ENCODE measurements at regions of chr3 and their contacts with region 1.

Region 1: DNA sequence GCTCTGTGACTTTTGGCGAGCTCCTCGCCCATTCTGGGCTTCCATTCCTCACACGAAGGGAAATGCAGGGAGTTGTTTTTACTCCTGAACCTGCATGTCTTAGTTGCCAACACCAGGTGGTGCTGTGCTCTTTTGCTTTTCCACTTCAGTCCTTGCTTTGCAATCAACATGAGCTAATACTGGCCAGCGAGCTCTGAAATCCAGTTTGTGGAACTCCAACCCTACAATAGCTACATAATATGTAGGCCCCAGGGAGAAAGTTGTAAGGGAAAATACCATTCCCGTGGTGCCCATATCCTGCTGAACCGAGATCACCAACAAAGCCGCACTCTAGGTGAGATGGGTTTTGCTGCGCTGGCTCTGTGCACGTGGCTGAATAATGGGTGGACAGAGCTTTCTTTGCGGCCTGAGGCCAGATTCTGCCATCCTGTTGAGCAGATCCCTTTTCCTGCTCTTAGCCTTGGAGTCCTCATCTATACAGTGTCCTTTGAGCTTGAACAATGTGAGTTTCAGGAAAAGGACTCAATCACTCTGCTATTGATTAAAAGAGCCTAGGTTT is 25.0 kb downstream of the LSM3 start:
- ATAC-seq: peak; percentile 74 to 83 (median 79)
- H3K4me3 ChIP-seq: no peak overlapping the region
- H3K27ac ChIP-seq: no peak overlapping the region
- H3K4me1 ChIP-seq: peaks cover 5 to 6% of the 10 kb centered on the region in 2 donors

Region 2: DNA sequence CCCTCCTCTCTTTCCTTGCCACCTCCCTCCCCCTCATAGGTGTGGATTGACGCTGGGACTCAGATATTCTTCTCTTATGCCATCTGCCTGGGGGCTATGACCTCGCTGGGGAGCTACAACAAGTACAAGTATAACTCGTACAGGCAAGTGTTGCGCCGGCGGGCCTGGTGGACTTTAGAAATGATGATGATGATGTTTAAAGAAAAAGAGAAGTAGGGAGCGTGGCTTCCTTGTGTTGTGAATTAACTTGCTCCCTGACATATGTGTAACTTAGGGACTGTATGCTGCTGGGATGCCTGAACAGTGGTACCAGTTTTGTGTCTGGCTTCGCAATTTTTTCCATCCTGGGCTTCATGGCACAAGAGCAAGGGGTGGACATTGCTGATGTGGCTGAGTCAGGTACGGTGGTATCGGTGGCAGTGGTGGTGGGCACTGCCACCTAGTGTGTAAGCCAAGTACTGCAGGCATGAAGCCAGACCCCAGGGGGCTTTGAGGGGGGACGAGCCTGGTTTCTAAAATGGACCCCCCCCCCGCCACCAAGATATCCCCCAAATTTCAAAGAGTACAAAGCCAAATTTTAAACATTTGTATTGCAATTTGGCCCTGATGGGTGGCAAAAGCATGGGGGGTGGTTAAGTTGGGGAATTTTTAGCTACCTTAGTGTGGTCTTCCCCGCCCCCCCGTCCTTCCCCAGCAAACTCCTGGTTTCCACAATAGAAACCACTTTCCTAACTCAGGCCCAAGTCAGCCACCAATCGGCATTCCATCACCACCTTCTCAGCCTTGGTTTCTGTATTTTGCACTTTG is 264.4 kb after region 1 on chr3:
- in situ Hi-C with region 1: loop called in 2 of 9 experiments (anchors 5 to 10 kb)
- ATAC-seq: peak in 7 of 8 experiments; percentile 18 to 86 (median 72)
- H3K4me3 ChIP-seq: no peak overlapping the region
- H3K27ac ChIP-seq: no peak overlapping the region
- H3K4me1 ChIP-seq: peaks cover 0 to 6% of the 10 kb centered on the region in 2 donors

Measured in motor neuron (in vitro differentiated cells).